GM10248 (cell line): ENCODE measurements at regions of chrX and their contacts with region 1.

Region 1: DNA sequence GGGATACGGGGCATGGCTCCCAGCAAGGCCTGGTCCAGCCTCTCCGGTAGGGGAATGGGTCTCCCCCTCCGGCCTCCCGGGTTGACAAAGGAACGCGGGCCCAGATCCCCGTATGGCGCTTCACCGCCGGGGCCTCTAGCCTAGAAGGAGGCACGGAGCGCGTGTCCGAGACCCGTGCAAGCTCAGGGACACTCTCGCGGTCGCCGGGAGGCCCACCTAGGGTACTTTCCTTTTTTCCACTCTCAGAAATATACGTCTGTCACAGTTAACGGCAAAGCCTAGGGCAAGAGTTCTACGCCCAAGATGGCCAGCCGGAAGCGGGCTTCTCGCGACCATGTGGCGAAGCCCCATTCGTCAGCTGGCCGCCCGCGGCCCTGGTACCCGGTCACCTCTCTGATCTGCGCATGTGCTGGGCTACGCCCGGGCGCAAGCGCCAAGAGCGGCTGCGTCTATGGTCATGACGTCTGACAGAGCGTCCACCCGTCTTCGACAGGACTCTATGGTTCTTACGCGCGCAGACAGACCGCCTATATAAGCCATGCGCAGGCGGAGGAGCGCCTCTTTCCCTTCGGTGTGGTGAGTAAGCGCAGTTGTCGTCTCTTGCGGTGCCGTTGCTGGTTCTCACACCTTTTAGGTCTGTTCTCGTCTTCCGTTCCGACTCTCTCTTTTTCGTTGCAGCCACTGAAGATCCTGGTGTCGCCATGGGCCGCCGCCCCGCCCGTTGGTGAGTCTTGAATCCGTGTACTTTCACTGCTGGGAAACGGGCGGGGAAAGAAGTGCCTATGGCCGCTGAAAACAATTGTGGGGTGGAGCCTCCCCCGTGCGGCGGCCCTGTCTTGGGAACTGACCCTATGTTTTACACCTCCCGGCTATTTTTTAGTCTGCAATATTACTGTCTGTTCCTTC is at the start of gene RPL10:
- DNase-seq: peak; percentile 92
- CTCF ChIP-seq: no peak

Region 2: DNA sequence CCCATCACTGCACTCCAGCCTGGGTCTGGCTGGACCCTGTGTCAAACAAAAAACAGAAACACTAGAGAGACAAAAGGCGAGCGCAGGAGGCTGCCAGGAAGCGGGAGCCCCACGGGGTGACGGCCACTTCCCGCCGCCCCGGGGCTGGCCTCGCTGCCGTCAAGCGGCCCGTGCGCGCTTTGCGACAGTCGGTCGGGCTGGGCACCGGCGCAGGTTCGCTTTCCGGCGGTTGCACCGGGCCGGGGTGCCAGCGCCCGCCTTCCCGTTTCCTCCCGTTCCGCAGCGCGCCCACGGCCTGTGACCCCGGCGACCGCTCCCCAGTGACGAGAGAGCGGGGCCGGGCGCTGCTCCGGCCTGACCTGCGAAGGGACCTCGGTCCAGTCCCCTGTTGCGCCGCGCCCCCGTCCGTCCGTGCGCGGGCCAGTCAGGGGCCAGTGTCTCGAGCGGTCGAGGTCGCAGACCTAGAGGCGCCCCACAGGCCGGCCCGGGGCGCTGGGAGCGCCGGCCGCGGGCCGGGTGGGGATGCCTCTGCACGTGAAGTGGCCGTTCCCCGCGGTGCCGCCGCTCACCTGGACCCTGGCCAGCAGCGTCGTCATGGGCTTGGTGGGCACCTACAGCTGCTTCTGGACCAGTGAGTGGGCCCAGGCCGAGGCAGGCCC is 13.4 kb after region 1 on chrX and contains the start of gene TAFAZZIN:
- CTCF ChIA-PET with region 1: interaction called, 12 read pairs
- POLR2A ChIA-PET with region 1: interaction called, 3 read pairs
- DNase-seq: peak; percentile 82
- CTCF ChIP-seq: no peak

Region 3: DNA sequence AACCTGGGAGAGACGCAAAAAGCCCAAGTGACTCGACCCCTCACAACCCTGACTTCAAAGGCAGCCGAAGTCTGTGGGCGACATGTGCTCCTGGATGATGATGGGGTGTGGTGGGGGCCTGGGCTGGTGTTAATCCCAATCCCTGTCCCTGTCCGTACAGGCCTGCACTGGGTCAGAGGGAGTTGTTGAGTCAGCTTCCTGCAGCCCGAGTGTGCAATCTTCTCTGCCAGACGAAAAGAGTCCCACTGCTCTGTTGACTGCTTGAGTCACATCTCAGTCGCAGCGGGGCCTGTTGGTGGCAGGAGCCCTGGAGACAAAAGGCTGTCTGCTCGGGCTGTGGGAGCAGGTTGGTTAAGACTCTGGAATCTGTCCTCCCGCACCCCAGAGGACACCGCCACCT is 107.7 kb after region 1 on chrX:
- CTCF ChIA-PET with region 1: no interaction called
- POLR2A ChIA-PET with region 1: no interaction called
- DNase-seq: no peak
- CTCF ChIP-seq: no peak

Region 4: GRCh38 chrX:154775419-154776349 is 377.6 kb after region 1 on chrX:
- CTCF ChIA-PET with region 1: no interaction called
- POLR2A ChIA-PET with region 1: no interaction called
- DNase-seq: no peak
- CTCF ChIP-seq: no peak